GM23248 (cell line): ENCODE measurements at regions of chr18 and their contacts with region 1.

Region 1: GRCh38 chr18:14969500-14969899 is 221.5 kb downstream of the ANKRD30B start:
- DNase-seq: no peak
- H3K4me3 ChIP-seq: no peak overlapping the region
- H3K27ac ChIP-seq: no peak overlapping the region
- H3K4me1 ChIP-seq: no peaks in the 10 kb centered on the region; the same call in 1 of the 2 replicates
- H3K27me3 ChIP-seq: no peaks in the 10 kb centered on the region

Region 2: DNA sequence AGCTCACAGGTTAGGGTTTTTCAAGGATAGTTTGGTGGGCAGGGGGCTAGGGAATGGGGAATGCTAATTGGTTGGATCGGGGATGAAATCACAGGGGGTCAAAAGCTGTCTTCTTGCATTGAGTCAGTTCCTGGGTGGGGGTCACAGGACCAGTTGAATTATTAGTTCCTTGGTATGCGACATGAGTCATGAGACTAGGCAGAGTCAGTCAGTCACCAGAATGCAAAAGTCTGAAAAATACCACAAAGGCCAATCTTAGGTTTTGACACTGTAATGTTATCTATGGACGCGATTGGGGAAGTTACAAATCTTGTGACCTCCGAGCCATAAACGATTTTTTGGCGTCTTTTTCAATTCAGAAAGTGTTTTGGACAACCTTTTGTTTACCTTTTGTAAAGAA is 938.4 kb before region 1 on chr18:
- in situ Hi-C with region 1: no loop called
- DNase-seq: no peak
- H3K4me3 ChIP-seq: no peak overlapping the region
- H3K27ac ChIP-seq: no peak overlapping the region
- H3K4me1 ChIP-seq: no peaks in the 10 kb centered on the region
- H3K27me3 ChIP-seq: no peaks in the 10 kb centered on the region

Region 3: GRCh38 chr18:14748496-14748895 is 221.0 kb before region 1 on chr18:
- in situ Hi-C with region 1: no loop called
- DNase-seq: no peak
- H3K4me3 ChIP-seq: no peak overlapping the region
- H3K27ac ChIP-seq: no peak overlapping the region
- H3K4me1 ChIP-seq: no peaks in the 10 kb centered on the region
- H3K27me3 ChIP-seq: no peaks in the 10 kb centered on the region

Region 4: GRCh38 chr18:14776801-14777200 is 192.7 kb before region 1 on chr18:
- in situ Hi-C with region 1: no loop called
- DNase-seq: no peak
- H3K4me3 ChIP-seq: no peak overlapping the region
- H3K27ac ChIP-seq: no peak overlapping the region
- H3K4me1 ChIP-seq: no peaks in the 10 kb centered on the region
- H3K27me3 ChIP-seq: no peaks in the 10 kb centered on the region

Region 5: DNA sequence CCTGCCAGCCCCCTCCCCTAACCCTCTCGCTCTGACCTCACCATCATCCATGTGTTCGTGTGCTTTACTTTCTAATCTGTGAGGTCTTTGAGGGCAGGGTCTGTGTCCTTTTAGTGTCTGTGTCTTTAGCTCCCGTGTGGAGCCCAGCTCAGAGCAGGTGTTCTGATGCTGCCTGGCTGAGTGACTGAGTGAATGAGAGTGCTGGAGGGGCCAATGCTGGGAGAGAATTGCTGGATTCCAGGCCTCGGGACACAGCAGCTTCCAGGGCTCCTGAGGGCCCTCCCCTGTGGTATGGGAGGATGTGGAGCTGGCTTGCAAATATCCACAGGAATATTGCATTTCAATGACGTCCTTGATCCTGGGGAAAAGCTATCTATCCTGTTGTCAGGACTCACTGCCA is 61.0 kb before region 1 on chr18:
- in situ Hi-C with region 1: loop called (anchors 10 kb)
- DNase-seq: no peak
- H3K4me3 ChIP-seq: no peak overlapping the region
- H3K27ac ChIP-seq: no peak overlapping the region
- H3K4me1 ChIP-seq: no peaks in the 10 kb centered on the region
- H3K27me3 ChIP-seq: no peaks in the 10 kb centered on the region

Region 6: DNA sequence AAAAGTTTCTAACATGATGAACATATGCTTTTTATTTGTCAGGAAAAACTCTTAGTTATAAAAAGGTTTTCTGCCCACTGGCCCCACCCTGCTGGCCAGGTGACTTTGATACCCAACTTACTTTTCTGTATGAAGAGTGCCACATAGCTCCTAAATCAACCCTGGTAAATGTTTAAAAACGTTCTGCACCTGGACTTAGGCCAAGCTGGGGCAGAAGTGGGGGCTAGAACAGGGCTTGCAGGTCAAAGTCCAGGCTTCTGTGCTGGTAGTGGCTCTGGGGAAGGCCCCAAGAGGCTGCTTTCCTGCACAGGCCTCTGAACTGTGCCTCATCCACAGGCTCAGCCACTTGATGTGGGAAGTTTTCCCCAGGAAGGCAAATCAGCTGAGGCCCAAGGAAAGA is 49.8 kb before region 1 on chr18:
- in situ Hi-C with region 1: no loop called
- DNase-seq: no peak
- H3K4me3 ChIP-seq: no peak overlapping the region
- H3K27ac ChIP-seq: no peak overlapping the region
- H3K4me1 ChIP-seq: no peaks in the 10 kb centered on the region
- H3K27me3 ChIP-seq: no peaks in the 10 kb centered on the region